Mucosa of descending colon (tissue), 3 donors: ENCODE measurements at regions of chr19 and their contacts with region 1.

Region 1: GRCh38 chr19:15177269-15178116 is 23.3 kb downstream of the NOTCH3 start:
- DNase-seq: peak; percentile 79 to 88 (median 87)
- ATAC-seq: peak; percentile 92
- H3K4me3 ChIP-seq: no peak overlapping the region
- H3K4me1 ChIP-seq: peaks cover 5% of the 10 kb centered on the region
- CTCF ChIP-seq: peak; percentile 99

Region 2: DNA sequence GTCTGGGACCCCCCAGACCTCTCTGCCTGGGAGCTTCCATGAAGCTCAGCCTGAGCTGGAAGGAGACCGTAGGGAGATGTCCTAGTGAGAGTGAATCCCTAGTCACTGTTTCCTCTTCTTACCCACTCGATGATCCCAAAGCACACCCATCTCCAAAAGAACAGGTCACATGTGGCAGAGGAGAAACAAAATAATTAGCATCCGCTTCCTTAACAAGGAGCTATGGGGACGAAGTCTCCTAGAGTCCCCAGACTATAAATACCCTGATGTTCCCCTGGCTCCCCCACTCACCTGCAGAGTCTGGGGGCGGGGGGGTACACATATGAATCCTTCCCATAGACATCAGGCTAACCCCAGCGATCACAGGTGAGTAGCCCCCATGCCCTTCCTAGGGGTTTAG is 95.6 kb before region 1 on chr19 and contains the start of gene OR1I1:
- intact Hi-C with region 1: no loop called
- DNase-seq: no peak
- ATAC-seq: no peak
- H3K4me3 ChIP-seq: no peak within 1 kb of the TSS
- H3K4me1 ChIP-seq: no peaks in the 10 kb centered on the region
- CTCF ChIP-seq: no peak
- total RNA-seq, gene OR1I1: not detected

Region 3: DNA sequence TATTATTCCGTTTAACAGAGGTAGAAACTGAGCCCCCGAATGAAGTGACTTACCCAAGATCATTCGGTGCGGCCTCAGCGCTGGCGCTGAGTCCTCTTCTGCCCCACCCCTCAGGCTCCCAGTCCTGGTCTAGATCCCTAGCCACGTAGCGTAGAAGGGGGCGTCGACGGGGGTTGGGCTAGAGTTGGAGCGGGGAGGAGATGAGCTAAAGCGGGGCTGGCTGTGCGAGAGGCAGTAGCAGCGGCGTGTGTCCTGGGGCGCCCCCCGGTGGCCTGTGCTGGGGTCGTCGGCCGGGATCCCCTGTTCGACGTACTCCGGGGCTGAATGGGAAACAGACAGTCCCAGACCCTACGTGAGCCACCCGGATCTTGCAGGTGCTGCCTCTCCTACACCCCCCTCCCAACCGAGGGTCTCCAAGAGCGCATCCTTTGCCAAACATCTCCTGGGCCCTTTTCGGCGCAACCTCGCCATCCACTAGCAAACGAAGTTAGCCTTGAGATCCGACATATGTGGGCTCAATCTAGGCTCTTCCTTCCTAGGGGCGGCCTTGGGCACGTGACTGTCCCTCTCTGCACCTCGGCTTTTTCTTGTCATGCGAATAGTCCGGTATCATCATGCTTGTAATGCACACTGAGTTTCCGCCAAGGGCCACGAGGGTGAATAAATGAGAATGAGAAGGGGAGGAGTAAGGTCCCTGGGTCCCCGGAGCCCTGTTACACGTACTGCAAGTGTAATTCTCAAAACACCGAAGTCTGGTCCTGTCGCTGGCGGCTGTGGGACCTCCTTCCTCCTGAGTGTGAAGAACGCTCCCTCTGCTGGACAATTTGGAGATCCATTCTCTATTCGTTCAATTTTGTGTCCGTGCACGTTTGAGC is 378.5 kb after region 1 on chr19:
- intact Hi-C with region 1: loop called (anchors 5 kb)
- DNase-seq: peak; percentile 91 to 92 (median 91)
- ATAC-seq: peak; percentile 96
- H3K4me3 ChIP-seq: no peak overlapping the region
- H3K4me1 ChIP-seq: peaks cover 16% of the 10 kb centered on the region
- CTCF ChIP-seq: peak; percentile 46